K562 (cell line): ENCODE measurements at regions of chr7 and their contacts with region 1.

Region 1: GRCh38 chr7:56051339-56052191 is at the starts of genes CCT6A and PSPH:
- DNase-seq: peak; percentile 95 to 98 (median 96)
- ATAC-seq: peak; percentile 94
- H3K4me3 ChIP-seq: peak within 1 kb of the TSS; percentile 82
- H3K27ac ChIP-seq: peak within 1 kb of the TSS; percentile 92
- H3K4me1 ChIP-seq: peaks cover 21 to 29% of the 10 kb centered on the region in 2 experiments
- H3K27me3 ChIP-seq: no peaks in the 10 kb centered on the region
- CTCF ChIP-seq: no peak
- EP300 ChIP-seq: peak; percentile 29; the same call in 1 of the 2 replicates
- POLR2A ChIP-seq: peak; percentile 92
- RAD21 ChIP-seq: 0 out of 4 replicates have a peak, but pooled peaks of 1 of the 2 experiments have one; percentile 7
- polyA plus RNA-seq, gene CCT6A: 244 to 314 TPM
- polyA plus RNA-seq, gene PSPH: 6.3 to 9.0 TPM

Region 2: DNA sequence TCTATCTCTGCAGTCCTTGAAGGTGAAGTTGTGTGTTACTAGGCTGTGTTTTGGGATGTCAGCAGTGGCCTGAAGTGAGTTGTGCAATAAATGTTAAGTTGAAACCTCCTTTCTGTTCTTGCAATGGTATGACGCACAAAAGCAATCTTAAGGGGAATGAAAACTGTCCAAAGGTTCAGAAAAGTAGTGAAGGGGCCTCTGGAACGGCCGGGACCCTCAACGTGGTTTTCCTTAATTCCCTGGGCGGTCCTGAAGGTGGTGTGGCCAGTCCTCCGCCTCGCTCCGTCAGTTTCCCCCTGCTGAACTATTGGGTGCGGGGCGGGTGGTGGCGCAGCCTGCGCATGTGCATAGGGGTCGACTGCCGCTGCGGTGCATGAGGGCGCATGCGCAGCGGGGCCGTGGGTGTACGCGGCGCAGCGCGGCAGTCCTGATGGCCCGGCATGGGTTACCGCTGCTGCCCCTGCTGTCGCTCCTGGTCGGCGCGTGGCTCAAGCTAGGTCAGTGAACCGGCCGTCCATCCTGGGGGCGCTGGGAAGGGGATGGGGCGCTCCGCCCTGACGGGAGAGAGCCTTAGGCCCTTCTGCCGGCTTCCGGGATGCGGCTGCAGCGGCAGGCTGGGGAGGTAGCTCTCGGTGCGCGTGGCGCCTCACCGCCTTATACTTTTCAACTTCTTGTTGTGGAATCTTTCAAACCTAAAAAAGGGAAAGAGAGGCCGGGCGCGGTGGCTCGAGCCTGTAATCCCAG is 12.5 kb after region 1 on chr7 and contains the start of gene SUMF2:
- CTCF ChIA-PET with region 1: no interaction called
- POLR2A ChIA-PET with region 1: interaction called, 40 read pairs
- in situ Hi-C with region 1: no loop called
- intact Hi-C with region 1: loop called (anchors 1 kb)
- DNase-seq: peak; percentile 95 to 98 (median 97)
- ATAC-seq: peak; percentile 92
- H3K4me3 ChIP-seq: peak within 1 kb of the TSS; percentile 57
- H3K27ac ChIP-seq: peak within 1 kb of the TSS; percentile 86
- H3K4me1 ChIP-seq: peaks cover 28 to 40% of the 10 kb centered on the region in 2 experiments
- H3K27me3 ChIP-seq: no peaks in the 10 kb centered on the region
- CTCF ChIP-seq: peak; percentile 25 to 32 (median 27); a peak in 3 of 6 replicates
- EP300 ChIP-seq: no peak
- POLR2A ChIP-seq: peak; percentile 95
- RAD21 ChIP-seq: no peak; a peak in 1 of 4 replicates
- polyA plus RNA-seq, gene SUMF2: 39.0 to 60.3 TPM

Region 3: GRCh38 chr7:56250149-56250548 is 198.6 kb after region 1 on chr7:
- CTCF ChIA-PET with region 1: no interaction called
- POLR2A ChIA-PET with region 1: no interaction called
- in situ Hi-C with region 1: no loop called
- intact Hi-C with region 1: no loop called
- DNase-seq: no peak
- ATAC-seq: no peak
- H3K4me3 ChIP-seq: no peak overlapping the region
- H3K27ac ChIP-seq: no peak overlapping the region
- H3K4me1 ChIP-seq: no peaks in the 10 kb centered on the region
- H3K27me3 ChIP-seq: no peaks in the 10 kb centered on the region
- CTCF ChIP-seq: no peak
- EP300 ChIP-seq: no peak
- POLR2A ChIP-seq: no peak
- RAD21 ChIP-seq: no peak